CD8-positive, alpha-beta T cell (primary cell): ENCODE measurements at regions of chr2 and their contacts with region 1.

Region 1: GRCh38 chr2:85420536-85421259 is 2.2 kb downstream of the SH2D6 start:
- DNase-seq: peak; percentile 75 to 95 (median 90)
- ATAC-seq: peak; percentile 74
- H3K4me3 ChIP-seq: no peak overlapping the region
- H3K4me3 Mint-ChIP-seq: peak overlapping the region; percentile 69
- H3K27ac ChIP-seq: no peak overlapping the region
- H3K27ac Mint-ChIP-seq: peak overlapping the region; percentile 58
- H3K4me1 ChIP-seq: peaks cover 27% of the 10 kb centered on the region
- H3K4me1 Mint-ChIP-seq: peaks cover 18% of the 10 kb centered on the region
- H3K27me3 ChIP-seq: no peaks in the 10 kb centered on the region
- H3K27me3 Mint-ChIP-seq: no peaks in the 10 kb centered on the region
- CTCF ChIP-seq: peak; percentile 97

Region 2: DNA sequence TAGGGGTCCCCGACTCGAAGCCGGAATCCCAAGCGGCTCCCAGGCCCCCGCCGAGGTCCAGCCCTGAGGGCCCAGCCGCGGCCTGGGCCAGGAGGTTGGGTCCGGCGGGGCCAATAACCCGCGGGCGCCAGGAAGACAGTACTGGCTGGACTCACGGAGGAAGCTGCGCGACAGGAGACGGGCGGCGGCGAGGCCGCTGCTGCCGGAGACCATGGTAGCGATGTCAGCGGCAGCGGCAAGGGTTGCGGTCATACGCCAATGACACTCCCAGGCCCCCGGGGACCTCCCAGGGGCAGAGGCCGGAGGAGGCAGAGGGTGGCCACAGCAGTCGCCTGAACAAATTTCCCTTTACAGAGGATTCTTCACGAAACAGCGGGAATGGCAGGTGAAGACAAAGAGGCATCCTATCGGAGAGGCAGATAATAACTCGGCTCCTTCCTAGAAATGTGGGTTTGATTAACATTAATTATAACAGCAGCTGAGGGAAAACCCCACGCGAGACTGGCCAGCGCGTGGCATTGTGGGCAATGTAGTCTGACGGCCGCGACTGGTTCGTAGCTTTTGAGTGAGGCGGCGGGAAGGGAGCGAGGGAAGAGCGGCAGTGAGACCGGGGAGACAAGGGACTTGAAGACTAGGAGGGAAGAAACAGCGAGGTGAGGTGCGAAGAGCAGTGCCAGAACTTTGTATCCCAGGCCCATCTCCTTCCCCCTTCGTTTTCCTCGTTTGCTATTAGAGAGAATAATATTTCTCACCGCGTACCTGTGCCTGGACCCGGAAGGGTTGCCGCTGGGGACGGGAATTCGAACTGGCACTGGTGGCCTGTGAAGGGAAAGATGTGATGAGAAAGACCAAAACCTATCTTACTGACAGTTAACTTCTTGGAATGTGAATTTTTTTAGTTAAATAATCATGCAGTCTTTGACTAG is 961.4 kb before region 1 on chr2 and contains the start of gene SUCLG1:
- CTCF ChIA-PET with region 1: no interaction called
- POLR2A ChIA-PET with region 1: no interaction called
- intact Hi-C with region 1: loop called in 1 of 2 experiments (anchors 1 kb)
- DNase-seq: peak; percentile 72 to 94 (median 87)
- ATAC-seq: peak; percentile 96
- H3K4me3 ChIP-seq: peak within 1 kb of the TSS; percentile 81 to 95
- H3K4me3 Mint-ChIP-seq: peak within 1 kb of the TSS; percentile 98
- H3K27ac ChIP-seq: peak within 1 kb of the TSS; percentile 78 to 97
- H3K27ac Mint-ChIP-seq: peak within 1 kb of the TSS; percentile 98
- H3K4me1 ChIP-seq: peaks cover 30% of the 10 kb centered on the region
- H3K4me1 Mint-ChIP-seq: peaks cover 46% of the 10 kb centered on the region
- H3K27me3 ChIP-seq: no peaks in the 10 kb centered on the region
- H3K27me3 Mint-ChIP-seq: no peaks in the 10 kb centered on the region
- CTCF ChIP-seq: no peak
- total RNA-seq, gene SUCLG1: 31.6 to 35.1 TPM

Region 3: DNA sequence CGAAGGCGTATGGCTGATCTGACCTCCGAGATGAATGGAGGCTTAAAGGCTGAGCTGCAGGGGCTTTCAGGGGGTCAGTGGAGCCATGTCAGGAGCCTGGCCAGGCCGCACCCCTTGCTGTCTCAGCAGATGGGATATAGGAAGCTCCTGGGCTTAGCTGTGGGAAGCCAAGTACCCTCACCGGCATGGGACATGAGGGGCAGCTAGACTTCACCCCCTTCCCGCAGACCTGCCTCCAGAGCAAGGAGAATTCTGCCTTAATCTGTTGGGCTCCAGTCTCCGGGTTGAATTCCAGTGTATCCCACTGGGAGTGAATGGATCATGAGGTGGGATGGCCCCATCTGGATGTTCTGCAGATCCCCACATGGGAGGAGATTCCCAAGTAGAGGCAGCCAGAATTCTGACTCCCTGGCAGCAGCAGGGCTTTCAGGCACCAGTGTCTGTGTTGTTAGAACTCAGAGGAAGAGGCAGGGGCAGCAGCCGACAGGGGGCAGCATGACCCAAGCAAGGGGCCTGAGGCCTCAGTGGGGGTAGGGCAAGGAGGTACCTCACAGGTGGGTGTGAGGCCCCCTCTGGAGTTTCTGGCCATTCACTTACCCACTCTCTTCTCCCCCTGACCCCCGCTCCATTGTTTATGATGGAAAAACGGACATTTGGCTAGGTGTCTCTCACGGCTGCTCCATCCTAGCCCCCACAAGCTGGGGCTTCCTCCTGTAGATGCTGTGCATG is 29.6 kb before region 1 on chr2:
- CTCF ChIA-PET with region 1: interaction called, 6 read pairs
- POLR2A ChIA-PET with region 1: no interaction called
- intact Hi-C with region 1: loop called (anchors 1 kb)
- DNase-seq: peak; percentile 59 to 86 (median 72)
- ATAC-seq: peak; percentile 81
- H3K4me3 ChIP-seq: no peak overlapping the region
- H3K4me3 Mint-ChIP-seq: no peak overlapping the region
- H3K27ac ChIP-seq: no peak overlapping the region
- H3K27ac Mint-ChIP-seq: no peak overlapping the region
- H3K4me1 ChIP-seq: peaks cover 9% of the 10 kb centered on the region
- H3K4me1 Mint-ChIP-seq: peaks cover 4% of the 10 kb centered on the region
- H3K27me3 ChIP-seq: no peaks in the 10 kb centered on the region
- H3K27me3 Mint-ChIP-seq: no peaks in the 10 kb centered on the region
- CTCF ChIP-seq: peak; percentile 49

Region 4: DNA sequence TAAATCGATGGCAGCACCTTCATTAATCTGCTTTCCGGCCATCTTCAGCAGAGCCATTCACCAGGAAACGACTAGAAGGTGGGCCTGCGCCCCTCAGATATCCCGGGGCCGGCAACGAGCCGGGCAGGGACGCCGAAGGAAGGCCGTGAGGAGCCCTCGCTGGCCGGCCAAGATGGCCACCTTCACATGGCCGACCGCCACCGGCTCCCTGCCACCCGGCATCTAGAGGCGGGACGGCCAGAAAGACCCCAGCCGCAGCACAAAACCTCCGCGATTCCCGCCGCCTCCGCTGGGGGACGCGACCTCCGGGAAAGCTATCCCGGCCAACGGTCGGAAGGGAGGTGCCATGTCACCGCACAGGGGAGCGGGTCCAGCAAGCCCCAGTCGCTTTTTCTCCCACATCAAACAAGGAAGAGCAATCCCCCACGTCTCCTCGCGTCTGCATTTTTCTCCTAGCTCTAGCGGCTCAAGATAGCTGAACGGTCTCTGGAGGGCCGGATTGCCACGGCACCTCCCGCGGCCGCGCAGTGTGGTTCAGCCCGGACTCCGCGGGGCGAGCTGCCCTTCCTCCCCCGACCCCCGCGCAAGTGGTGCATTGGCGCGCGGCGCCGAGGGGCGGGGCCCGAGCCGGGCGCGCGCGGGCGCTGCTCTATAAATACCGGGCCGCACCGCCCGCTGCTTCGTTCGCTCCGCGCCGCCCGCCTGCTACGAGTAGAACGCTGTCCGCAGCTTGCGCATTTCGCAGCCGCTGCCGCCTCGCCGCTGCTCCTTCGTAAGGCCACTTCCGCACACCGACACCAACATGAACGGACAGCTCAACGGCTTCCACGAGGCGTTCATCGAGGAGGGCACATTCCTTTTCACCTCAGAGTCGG is 118.0 kb after region 1 on chr2 and contains the start of gene MAT2A:
- CTCF ChIA-PET with region 1: interaction called, 17 read pairs
- POLR2A ChIA-PET with region 1: interaction called, 56 read pairs
- intact Hi-C with region 1: loop called (anchors 1 kb)
- DNase-seq: peak; percentile 71 to 96 (median 87)
- ATAC-seq: peak; percentile 77
- H3K4me3 ChIP-seq: peak within 1 kb of the TSS; percentile 96
- H3K4me3 Mint-ChIP-seq: peak within 1 kb of the TSS; percentile 94
- H3K27ac ChIP-seq: peak within 1 kb of the TSS; percentile 87 to 91
- H3K27ac Mint-ChIP-seq: peak within 1 kb of the TSS; percentile 93
- H3K4me1 ChIP-seq: peaks cover 28% of the 10 kb centered on the region
- H3K4me1 Mint-ChIP-seq: peaks cover 47% of the 10 kb centered on the region
- H3K27me3 ChIP-seq: no peaks in the 10 kb centered on the region
- H3K27me3 Mint-ChIP-seq: no peaks in the 10 kb centered on the region
- CTCF ChIP-seq: no peak
- total RNA-seq, gene MAT2A: 105 to 107 TPM

Region 5: GRCh38 chr2:85602476-85603234 is 182.0 kb after region 1 on chr2 and contains the start of gene TMEM150A:
- CTCF ChIA-PET with region 1: interaction called, 4 read pairs
- POLR2A ChIA-PET with region 1: interaction called, 4 read pairs
- intact Hi-C with region 1: loop called (anchors 1 to 2 kb)
- DNase-seq: peak; percentile 71 to 93 (median 87)
- ATAC-seq: peak; percentile 91
- H3K4me3 ChIP-seq: peak within 1 kb of the TSS; percentile 92 to 97
- H3K4me3 Mint-ChIP-seq: peak within 1 kb of the TSS; percentile 91
- H3K27ac ChIP-seq: peak within 1 kb of the TSS; percentile 58 to 67
- H3K27ac Mint-ChIP-seq: peak within 1 kb of the TSS; percentile 89
- H3K4me1 ChIP-seq: peaks cover 27% of the 10 kb centered on the region
- H3K4me1 Mint-ChIP-seq: peaks cover 37% of the 10 kb centered on the region
- H3K27me3 ChIP-seq: no peaks in the 10 kb centered on the region
- H3K27me3 Mint-ChIP-seq: no peaks in the 10 kb centered on the region
- CTCF ChIP-seq: no peak
- total RNA-seq, gene TMEM150A: 5.7 to 6.0 TPM

Region 6: GRCh38 chr2:85707304-85707703 is 286.6 kb after region 1 on chr2:
- CTCF ChIA-PET with region 1: interaction called, 4 read pairs
- POLR2A ChIA-PET with region 1: no interaction called
- intact Hi-C with region 1: loop called (anchors 1 to 2 kb)
- DNase-seq: peak in 8 of 9 experiments; percentile 44 to 89 (median 65)
- ATAC-seq: peak; percentile 85
- H3K4me3 ChIP-seq: no peak overlapping the region
- H3K4me3 Mint-ChIP-seq: no peak overlapping the region
- H3K27ac ChIP-seq: no peak overlapping the region
- H3K27ac Mint-ChIP-seq: no peak overlapping the region
- H3K4me1 ChIP-seq: peaks cover 12% of the 10 kb centered on the region
- H3K4me1 Mint-ChIP-seq: peaks cover 15% of the 10 kb centered on the region
- H3K27me3 ChIP-seq: no peaks in the 10 kb centered on the region
- H3K27me3 Mint-ChIP-seq: peaks cover 4% of the 10 kb centered on the region
- CTCF ChIP-seq: peak; percentile 62